Activated B cell treated with CpG ODN at 0.5 μM for 24 hours (primary cell): ENCODE measurements at regions of chr10 and their contacts with region 1.

Region 1: GRCh38 chr10:62528441-62528840 is 154.3 kb downstream of the ZNF365 start:
- DNase-seq: no peak
- ATAC-seq: peak; percentile 59
- H3K4me3 Mint-ChIP-seq: peak overlapping the region; percentile 64
- H3K27ac Mint-ChIP-seq: peak overlapping the region; percentile 92
- H3K4me1 Mint-ChIP-seq: peaks cover 58% of the 10 kb centered on the region
- H3K27me3 Mint-ChIP-seq: no peaks in the 10 kb centered on the region
- CTCF ChIP-seq: no peak

Region 2: DNA sequence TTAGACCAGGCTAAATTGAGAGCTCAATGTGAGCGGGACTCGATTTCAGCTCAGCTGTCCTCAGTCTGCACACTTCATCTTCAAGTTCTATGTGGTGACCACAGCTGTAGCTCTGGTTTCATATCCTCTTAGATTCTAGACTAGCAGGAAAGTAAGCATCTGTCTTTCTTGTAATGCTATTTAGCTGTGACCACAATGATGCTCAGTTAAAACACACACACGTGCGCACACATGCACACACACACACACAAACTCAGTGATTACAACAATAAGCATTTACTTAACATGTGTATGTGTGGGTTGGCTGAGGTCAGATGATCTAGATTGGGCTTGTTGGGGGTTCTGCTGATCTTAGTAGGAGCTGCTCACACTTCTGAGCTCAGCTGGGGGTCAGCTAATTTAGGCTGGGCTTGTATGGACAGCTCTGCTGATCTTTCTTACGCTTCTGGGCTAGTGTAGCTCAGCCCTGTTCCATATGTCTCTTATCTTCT is 71.8 kb before region 1 on chr10:
- CTCF ChIA-PET with region 1: interaction called, 3 read pairs
- POLR2A ChIA-PET with region 1: interaction called, 10 read pairs
- intact Hi-C with region 1: loop called (anchors 1 kb)
- DNase-seq: peak; percentile 22
- ATAC-seq: peak; percentile 93
- H3K4me3 Mint-ChIP-seq: peak overlapping the region; percentile 53
- H3K27ac Mint-ChIP-seq: peak overlapping the region; percentile 74
- H3K4me1 Mint-ChIP-seq: peaks cover 39% of the 10 kb centered on the region
- H3K27me3 Mint-ChIP-seq: no peaks in the 10 kb centered on the region
- CTCF ChIP-seq: no peak

Region 3: GRCh38 chr10:62506371-62506770 is 22.1 kb before region 1 on chr10:
- CTCF ChIA-PET with region 1: interaction called, 3 read pairs
- POLR2A ChIA-PET with region 1: interaction called, 6 read pairs
- intact Hi-C with region 1: loop called (anchors 2 kb)
- DNase-seq: no peak
- ATAC-seq: peak; percentile 58
- H3K4me3 Mint-ChIP-seq: no peak overlapping the region
- H3K27ac Mint-ChIP-seq: no peak overlapping the region
- H3K4me1 Mint-ChIP-seq: peaks cover 15% of the 10 kb centered on the region
- H3K27me3 Mint-ChIP-seq: no peaks in the 10 kb centered on the region
- CTCF ChIP-seq: no peak

Region 4: GRCh38 chr10:62541811-62542210 is 13.4 kb after region 1 on chr10:
- CTCF ChIA-PET with region 1: interaction called, 3 read pairs
- POLR2A ChIA-PET with region 1: interaction called, 21 read pairs
- intact Hi-C with region 1: loop called (anchors 1 kb)
- DNase-seq: no peak
- ATAC-seq: peak; percentile 74
- H3K4me3 Mint-ChIP-seq: no peak overlapping the region
- H3K27ac Mint-ChIP-seq: peak overlapping the region; percentile 57
- H3K4me1 Mint-ChIP-seq: peaks cover 73% of the 10 kb centered on the region
- H3K27me3 Mint-ChIP-seq: no peaks in the 10 kb centered on the region
- CTCF ChIP-seq: no peak

Region 5: DNA sequence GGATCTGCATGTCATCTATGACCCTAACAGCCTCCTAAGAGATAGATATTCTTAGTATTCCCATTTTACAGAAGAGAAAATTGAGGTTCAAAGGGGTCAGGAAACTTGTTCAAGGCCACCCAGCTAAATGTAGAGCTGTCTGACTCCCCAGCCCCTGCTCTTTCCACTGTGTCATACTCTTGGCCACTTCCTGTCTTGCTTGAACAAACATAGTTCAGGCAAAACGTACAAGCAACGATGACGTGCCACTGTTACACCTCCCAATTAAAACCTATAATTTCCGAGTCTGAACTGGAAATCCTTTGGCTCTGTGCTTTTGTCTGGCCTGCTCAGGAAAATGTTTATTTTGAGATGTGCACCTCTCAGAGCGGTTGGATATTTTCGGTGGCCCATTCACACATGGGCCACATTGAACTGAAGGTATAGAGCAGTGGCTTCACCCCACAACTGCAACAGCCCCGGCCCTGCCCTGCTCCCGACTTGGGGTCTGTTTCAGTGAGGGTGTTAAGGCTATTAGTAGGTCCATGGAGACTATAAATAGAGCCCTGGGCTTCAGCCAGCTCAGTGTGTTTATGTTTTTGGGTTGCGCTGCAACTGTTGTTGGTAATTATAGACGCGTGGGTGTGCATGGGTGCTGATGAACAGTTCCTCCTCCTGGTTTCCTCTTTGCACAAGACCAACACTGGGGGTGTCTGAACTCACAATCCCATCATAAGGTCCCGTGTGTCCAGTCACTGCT is 103.8 kb after region 1 on chr10:
- CTCF ChIA-PET with region 1: no interaction called
- POLR2A ChIA-PET with region 1: no interaction called
- intact Hi-C with region 1: loop called (anchors 1 kb)
- DNase-seq: no peak
- ATAC-seq: peak; percentile 81
- H3K4me3 Mint-ChIP-seq: peak overlapping the region; percentile 83
- H3K27ac Mint-ChIP-seq: peak overlapping the region; percentile 98
- H3K4me1 Mint-ChIP-seq: peaks cover 58% of the 10 kb centered on the region
- H3K27me3 Mint-ChIP-seq: no peaks in the 10 kb centered on the region
- CTCF ChIP-seq: no peak

Region 6: DNA sequence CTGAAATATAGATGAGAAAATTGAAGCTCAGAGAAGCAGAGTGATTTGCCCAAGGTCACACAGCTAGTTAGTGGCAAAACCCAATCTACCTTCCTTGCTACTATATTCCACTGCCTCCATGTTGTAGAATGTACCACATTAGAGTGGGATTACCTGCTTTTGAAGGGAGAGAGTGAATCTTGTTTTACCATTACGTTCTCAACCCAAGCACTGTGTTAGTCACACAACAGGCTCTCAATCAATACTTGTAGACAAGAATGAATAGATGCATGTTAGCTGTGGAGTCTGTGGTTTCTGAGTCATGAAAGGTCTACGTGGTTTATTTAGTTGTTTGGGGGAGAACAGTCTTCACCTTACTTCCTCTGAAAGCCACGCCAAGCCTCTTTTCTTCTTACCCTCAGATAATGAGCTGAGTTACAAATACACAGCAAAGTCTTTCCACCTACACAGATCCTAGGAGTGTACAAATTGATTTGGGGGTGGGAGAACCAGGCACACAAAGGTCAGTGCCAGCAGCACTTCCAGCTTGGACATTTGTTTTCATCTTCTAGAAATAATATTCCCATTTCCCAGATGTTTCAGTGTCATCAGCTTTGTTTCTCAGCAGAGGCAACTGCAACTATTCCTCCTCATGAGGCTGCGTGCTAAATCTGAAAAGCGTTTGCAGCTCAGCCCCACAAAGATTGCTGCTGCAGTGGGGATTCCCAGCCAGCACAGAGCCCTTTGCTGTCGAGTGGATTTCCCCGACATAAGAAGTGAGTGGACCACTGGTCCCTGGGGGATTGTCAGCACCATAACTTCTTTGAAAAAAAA is 204.6 kb after region 1 on chr10:
- CTCF ChIA-PET with region 1: no interaction called
- POLR2A ChIA-PET with region 1: interaction called, 8 read pairs
- intact Hi-C with region 1: loop called (anchors 1 kb)
- DNase-seq: peak; percentile 46
- ATAC-seq: peak; percentile 77
- H3K4me3 Mint-ChIP-seq: peak overlapping the region; percentile 62
- H3K27ac Mint-ChIP-seq: no peak overlapping the region
- H3K4me1 Mint-ChIP-seq: peaks cover 2% of the 10 kb centered on the region
- H3K27me3 Mint-ChIP-seq: no peaks in the 10 kb centered on the region
- CTCF ChIP-seq: no peak